Endothelial cell of umbilical vein (primary cell): ENCODE measurements at regions of chr15 and their contacts with region 1.

Region 1: GRCh38 chr15:34342737-34343575 is at the starts of genes NOP10 and NUTM1:
- DNase-seq: peak; percentile 94
- H3K4me3 ChIP-seq: peak within 1 kb of the TSS; percentile 26 to 89 (median 66)
- H3K27ac ChIP-seq: peak within 1 kb of the TSS; percentile 76
- H3K4me1 ChIP-seq: peaks cover 11% of the 10 kb centered on the region
- H3K27me3 ChIP-seq: no peaks in the 10 kb centered on the region
- CTCF ChIP-seq: peak; percentile 87 to 99
- POLR2A ChIP-seq: peak; percentile 94
- total RNA-seq, gene NOP10: 215 and 225 TPM in 2 replicates
- total RNA-seq, gene NUTM1: not detected in 2 replicates

Region 2: GRCh38 chr15:34070003-34070402 is 273.0 kb before region 1 on chr15:
- CTCF ChIA-PET with region 1: no interaction called
- POLR2A ChIA-PET with region 1: no interaction called
- dilution Hi-C with region 1: no loop called
- intact Hi-C with region 1: no loop called
- DNase-seq: no peak
- H3K4me3 ChIP-seq: no peak overlapping the region
- H3K27ac ChIP-seq: no peak overlapping the region
- H3K4me1 ChIP-seq: no peaks in the 10 kb centered on the region
- H3K27me3 ChIP-seq: no peaks in the 10 kb centered on the region
- CTCF ChIP-seq: no peak
- POLR2A ChIP-seq: no peak

Region 3: GRCh38 chr15:34101366-34102175 is 241.4 kb before region 1 on chr15 and contains the starts of genes EMC7 and PGBD4:
- CTCF ChIA-PET with region 1: no interaction called
- POLR2A ChIA-PET with region 1: no interaction called
- dilution Hi-C with region 1: no loop called
- intact Hi-C with region 1: loop called (anchors 2 kb)
- DNase-seq: peak; percentile 99
- H3K4me3 ChIP-seq: peak within 1 kb of the TSS; percentile 66 to 90 (median 66)
- H3K27ac ChIP-seq: peak within 1 kb of the TSS; percentile 78
- H3K4me1 ChIP-seq: peaks cover 17% of the 10 kb centered on the region
- H3K27me3 ChIP-seq: no peaks in the 10 kb centered on the region
- CTCF ChIP-seq: no peak
- POLR2A ChIP-seq: peak; percentile 85
- total RNA-seq, gene EMC7: 69.9 and 70.6 TPM in 2 replicates
- total RNA-seq, gene PGBD4: 1.1 TPM in 2 replicates

Region 4: DNA sequence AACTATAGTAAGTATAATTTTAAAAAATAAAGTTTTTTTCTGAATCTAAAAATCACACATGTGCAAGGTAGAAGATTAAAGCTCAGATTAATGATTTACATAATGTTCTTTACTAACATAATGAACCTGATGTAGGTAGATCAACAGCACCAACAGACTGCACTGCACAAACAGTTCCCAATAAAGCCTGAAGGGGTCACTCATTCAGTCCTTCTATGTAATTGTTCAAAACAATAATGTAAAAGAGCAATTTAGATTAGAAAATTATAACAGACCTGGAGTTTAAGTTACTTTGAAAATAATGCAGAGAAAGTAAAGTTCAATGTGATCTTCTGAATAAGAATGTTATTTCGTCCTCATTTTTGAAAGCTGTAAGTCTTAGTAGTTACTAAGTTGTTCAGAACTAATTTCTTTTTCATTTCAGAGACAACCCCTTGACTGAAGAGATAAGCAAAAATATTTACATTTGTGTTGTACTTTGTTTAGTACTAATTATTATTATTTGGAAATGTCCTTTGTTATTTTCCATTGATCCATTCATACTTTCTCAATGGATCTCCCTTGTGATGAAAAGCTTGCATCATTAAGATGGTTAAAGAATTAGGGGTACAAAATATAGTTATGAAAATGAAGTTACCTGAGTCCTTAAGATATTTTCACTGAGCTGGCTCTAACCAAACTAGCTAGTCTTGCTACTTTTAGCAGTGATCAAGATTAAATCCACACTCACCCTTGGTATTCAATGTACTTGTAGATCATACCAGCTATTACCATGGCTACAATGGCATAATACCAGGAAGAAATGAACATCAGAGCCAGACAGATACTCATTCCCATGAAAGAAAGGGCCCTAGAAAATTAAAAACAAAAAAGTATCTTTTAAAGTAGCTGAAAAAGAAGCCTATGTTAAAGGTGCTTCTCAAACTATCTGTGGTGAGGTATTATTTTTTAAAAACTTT is 101.3 kb before region 1 on chr15:
- CTCF ChIA-PET with region 1: interaction called, 5 read pairs
- POLR2A ChIA-PET with region 1: no interaction called
- dilution Hi-C with region 1: no loop called
- intact Hi-C with region 1: loop called (anchors 1 kb)
- DNase-seq: peak; percentile 67
- H3K4me3 ChIP-seq: no peak overlapping the region
- H3K27ac ChIP-seq: no peak overlapping the region
- H3K4me1 ChIP-seq: peaks cover 21% of the 10 kb centered on the region
- H3K27me3 ChIP-seq: no peaks in the 10 kb centered on the region
- CTCF ChIP-seq: peak; percentile 47 to 51
- POLR2A ChIP-seq: no peak

Region 5: GRCh38 chr15:34327906-34328305 is 15.1 kb before region 1 on chr15:
- CTCF ChIA-PET with region 1: interaction called, 10 read pairs
- POLR2A ChIA-PET with region 1: interaction called, 6 read pairs
- dilution Hi-C with region 1: no loop called
- intact Hi-C with region 1: no loop called
- DNase-seq: no peak
- H3K4me3 ChIP-seq: no peak overlapping the region
- H3K27ac ChIP-seq: no peak overlapping the region
- H3K4me1 ChIP-seq: no peaks in the 10 kb centered on the region
- H3K27me3 ChIP-seq: no peaks in the 10 kb centered on the region
- CTCF ChIP-seq: no peak
- POLR2A ChIP-seq: no peak

Region 6: DNA sequence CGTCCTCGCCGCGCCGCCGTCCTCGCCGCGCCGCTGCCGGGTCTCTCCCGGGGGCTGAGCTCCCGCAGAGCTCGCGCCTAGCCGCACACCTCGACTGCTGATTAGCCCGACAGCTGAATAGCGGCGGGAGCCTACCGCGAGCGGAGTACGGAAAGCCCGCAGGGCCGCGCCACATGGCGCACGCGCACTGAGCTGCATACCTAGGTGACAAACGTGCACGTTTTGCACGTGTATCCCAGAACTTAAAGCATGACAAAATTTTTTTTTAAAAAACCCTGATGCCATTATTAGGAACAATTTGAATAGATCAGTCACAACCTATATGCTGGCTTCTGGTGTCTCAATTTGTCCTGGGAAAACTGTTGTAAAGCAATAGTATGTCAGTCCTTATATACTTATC is 94.7 kb after region 1 on chr15 and contains the start of gene GOLGA8A:
- CTCF ChIA-PET with region 1: no interaction called
- POLR2A ChIA-PET with region 1: no interaction called
- dilution Hi-C with region 1: no loop called
- intact Hi-C with region 1: loop called (anchors 10 kb)
- DNase-seq: peak; percentile 81
- H3K4me3 ChIP-seq: peak within 1 kb of the TSS; percentile 68 to 78 (median 77)
- H3K27ac ChIP-seq: peak within 1 kb of the TSS; percentile 23
- H3K4me1 ChIP-seq: peaks cover 7% of the 10 kb centered on the region
- H3K27me3 ChIP-seq: peaks cover 2 to 8% of the 10 kb centered on the region in 2 experiments
- CTCF ChIP-seq: no peak
- POLR2A ChIP-seq: no peak
- total RNA-seq, gene GOLGA8A: 53.5 and 61.1 TPM in 2 replicates

Region 7: GRCh38 chr15:34587717-34588674 is 245.0 kb after region 1 on chr15:
- CTCF ChIA-PET with region 1: interaction called, 8 read pairs
- POLR2A ChIA-PET with region 1: no interaction called
- dilution Hi-C with region 1: no loop called
- intact Hi-C with region 1: loop called (anchors 1 kb)
- DNase-seq: peak; percentile 74
- H3K4me3 ChIP-seq: peak overlapping the region in 1 of 3 experiments; percentile 58
- H3K27ac ChIP-seq: no peak overlapping the region
- H3K4me1 ChIP-seq: peaks cover 5% of the 10 kb centered on the region
- H3K27me3 ChIP-seq: no peaks in the 10 kb centered on the region
- CTCF ChIP-seq: peak; percentile 64 to 74
- POLR2A ChIP-seq: no peak

Region 8: GRCh38 chr15:34621675-34622074 is 278.7 kb after region 1 on chr15:
- CTCF ChIA-PET with region 1: no interaction called
- POLR2A ChIA-PET with region 1: no interaction called
- dilution Hi-C with region 1: no loop called
- intact Hi-C with region 1: no loop called
- DNase-seq: peak; percentile 69
- H3K4me3 ChIP-seq: no peak overlapping the region
- H3K27ac ChIP-seq: peak overlapping the region; percentile 61
- H3K4me1 ChIP-seq: peaks cover 41% of the 10 kb centered on the region
- H3K27me3 ChIP-seq: no peaks in the 10 kb centered on the region
- CTCF ChIP-seq: peak; percentile 16 to 38
- POLR2A ChIP-seq: no peak